GM12878 (cell line): ENCODE measurements at regions of chr2 and their contacts with region 1.

Region 1: DNA sequence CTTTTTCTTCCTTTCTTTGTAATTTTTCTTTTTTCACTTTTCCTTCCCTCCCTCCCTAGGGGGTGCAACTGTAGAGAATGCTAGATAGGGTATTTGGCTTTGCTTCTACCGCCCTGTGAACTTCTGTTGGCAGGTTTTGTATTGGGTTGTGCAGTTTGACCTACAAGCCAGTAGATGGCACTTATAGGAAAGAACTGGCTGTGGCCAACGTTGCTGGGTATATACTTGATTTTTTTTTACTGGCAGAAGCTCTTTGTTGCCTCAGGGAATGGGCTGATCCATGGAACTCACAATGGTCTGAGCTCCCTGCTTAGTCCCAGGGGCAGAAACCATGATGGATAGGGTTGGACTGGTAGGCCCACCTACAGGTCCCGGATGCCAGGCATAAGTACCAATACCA is 1019.5 kb upstream of the LRRTM1 start:
- DNase-seq: no peak
- ATAC-seq: peak; percentile 93
- H3K4me3 ChIP-seq: no peak overlapping the region
- H3K27ac ChIP-seq: no peak overlapping the region
- H3K4me1 ChIP-seq: no peaks in the 10 kb centered on the region
- H3K27me3 ChIP-seq: no peaks in the 10 kb centered on the region
- CTCF ChIP-seq: peak; percentile 24 to 54 (median 53); a peak in 4 of 6 replicates
- EP300 ChIP-seq: no peak
- POLR2A ChIP-seq: no peak
- RAD21 ChIP-seq: peak; percentile 19; the same call in 1 of the 2 replicates

Region 2: GRCh38 chr2:82023710-82024109 is 699.7 kb after region 1 on chr2:
- CTCF ChIA-PET with region 1: no interaction called
- POLR2A ChIA-PET with region 1: no interaction called
- RAD21 ChIA-PET with region 1: no interaction called
- SMC1A ChIA-PET with region 1: interaction called, 3 read pairs
- in situ Hi-C with region 1: no loop called
- intact Hi-C with region 1: loop called (anchors 2 kb)
- DNase-seq: no peak
- ATAC-seq: peak; percentile 66
- H3K4me3 ChIP-seq: no peak overlapping the region
- H3K27ac ChIP-seq: no peak overlapping the region
- H3K4me1 ChIP-seq: no peaks in the 10 kb centered on the region
- H3K27me3 ChIP-seq: no peaks in the 10 kb centered on the region
- CTCF ChIP-seq: peak in 1 of 3 experiments; percentile 35; a peak in 2 of 6 replicates
- EP300 ChIP-seq: no peak
- POLR2A ChIP-seq: no peak
- RAD21 ChIP-seq: no peak